GM12878 (cell line): ENCODE measurements at regions of chr3 and their contacts with region 1.

Region 1: GRCh38 chr3:153785902-153786301 is 335.3 kb upstream of the ARHGEF26 start:
- DNase-seq: no peak
- ATAC-seq: peak; percentile 78
- H3K4me3 ChIP-seq: no peak overlapping the region
- H3K27ac ChIP-seq: no peak overlapping the region
- H3K4me1 ChIP-seq: no peaks in the 10 kb centered on the region
- H3K27me3 ChIP-seq: no peaks in the 10 kb centered on the region
- CTCF ChIP-seq: peak in 2 of 3 experiments; percentile 19 to 25; a peak in 1 of 6 replicates
- EP300 ChIP-seq: no peak
- POLR2A ChIP-seq: no peak
- RAD21 ChIP-seq: peak; percentile 30; the same call in 1 of the 2 replicates

Region 2: DNA sequence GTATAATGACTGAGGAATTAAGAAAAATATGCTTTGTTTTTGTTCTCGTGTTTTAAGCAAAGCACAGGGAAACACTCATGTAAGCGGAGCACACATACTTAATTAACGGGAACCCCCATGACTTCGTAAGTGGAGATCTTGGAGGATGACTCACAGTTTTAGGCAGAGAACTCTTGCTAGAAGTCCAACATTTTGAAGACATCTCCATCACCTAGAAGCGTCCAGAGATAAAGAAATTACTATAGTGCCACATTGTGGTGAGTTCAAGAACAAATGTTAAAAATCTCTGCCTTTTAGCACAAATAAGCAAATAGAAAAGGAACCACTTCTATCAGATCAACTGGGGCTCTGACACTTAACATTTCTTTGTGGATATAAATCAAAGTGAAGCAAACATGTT is 141.2 kb after region 1 on chr3:
- CTCF ChIA-PET with region 1: interaction called, 14 read pairs
- POLR2A ChIA-PET with region 1: no interaction called
- RAD21 ChIA-PET with region 1: interaction called, 4 read pairs
- SMC1A ChIA-PET with region 1: interaction called, 26 read pairs
- in situ Hi-C with region 1: no loop called
- intact Hi-C with region 1: loop called (anchors 1 kb)
- DNase-seq: peak; percentile 2
- ATAC-seq: peak; percentile 85
- H3K4me3 ChIP-seq: no peak overlapping the region
- H3K27ac ChIP-seq: no peak overlapping the region
- H3K4me1 ChIP-seq: no peaks in the 10 kb centered on the region
- H3K27me3 ChIP-seq: no peaks in the 10 kb centered on the region
- CTCF ChIP-seq: peak in 1 of 3 experiments; percentile 36; a peak in 2 of 6 replicates
- EP300 ChIP-seq: no peak
- POLR2A ChIP-seq: no peak
- RAD21 ChIP-seq: no peak

Region 3: DNA sequence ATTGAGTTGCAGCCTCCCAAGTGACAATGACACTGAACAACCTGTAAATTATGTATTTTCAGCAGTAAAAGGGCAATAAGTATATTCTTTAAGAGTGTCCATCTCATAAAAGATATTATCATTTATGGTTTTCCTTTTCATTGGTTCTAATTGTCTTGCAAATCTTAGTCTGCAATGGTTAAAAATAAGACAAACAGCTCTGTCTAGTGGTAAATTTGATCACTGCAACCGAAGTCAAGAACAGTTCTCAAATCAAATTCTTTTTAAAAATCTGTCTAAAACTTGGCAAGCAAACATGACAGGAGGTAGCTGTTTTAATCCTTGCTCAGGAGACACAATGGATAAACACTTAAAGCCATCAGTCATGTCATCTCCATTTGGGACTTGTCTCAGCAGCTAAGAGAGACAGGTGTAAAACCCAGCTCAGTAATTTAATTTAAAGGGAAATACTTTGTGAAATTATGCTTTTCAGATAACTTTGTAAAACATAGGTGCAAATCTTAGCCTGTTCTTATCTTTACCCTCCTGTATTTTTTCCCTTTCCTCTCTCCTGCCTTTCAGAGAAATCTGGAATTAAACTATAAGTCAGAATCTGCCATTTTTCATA is 184.9 kb after region 1 on chr3:
- CTCF ChIA-PET with region 1: interaction called, 20 read pairs
- POLR2A ChIA-PET with region 1: no interaction called
- RAD21 ChIA-PET with region 1: interaction called, 9 read pairs
- SMC1A ChIA-PET with region 1: interaction called, 4 read pairs
- in situ Hi-C with region 1: no loop called
- intact Hi-C with region 1: loop called (anchors 2 kb)
- DNase-seq: no peak
- ATAC-seq: peak; percentile 27; the same call in 2 of the 3 replicates
- H3K4me3 ChIP-seq: no peak overlapping the region
- H3K27ac ChIP-seq: no peak overlapping the region
- H3K4me1 ChIP-seq: peaks cover 37% of the 10 kb centered on the region
- H3K27me3 ChIP-seq: no peaks in the 10 kb centered on the region
- CTCF ChIP-seq: peak; percentile 41 to 63 (median 49)
- EP300 ChIP-seq: no peak
- POLR2A ChIP-seq: no peak
- RAD21 ChIP-seq: peak; percentile 60

Region 4: GRCh38 chr3:154018100-154018696 is 232.3 kb after region 1 on chr3:
- CTCF ChIA-PET with region 1: no interaction called
- POLR2A ChIA-PET with region 1: no interaction called
- RAD21 ChIA-PET with region 1: no interaction called
- SMC1A ChIA-PET with region 1: no interaction called
- in situ Hi-C with region 1: no loop called
- intact Hi-C with region 1: loop called (anchors 1 kb)
- DNase-seq: peak; percentile 11
- ATAC-seq: peak; percentile 92
- H3K4me3 ChIP-seq: no peak overlapping the region
- H3K27ac ChIP-seq: no peak overlapping the region
- H3K4me1 ChIP-seq: no peaks in the 10 kb centered on the region
- H3K27me3 ChIP-seq: no peaks in the 10 kb centered on the region
- CTCF ChIP-seq: peak; percentile 65 to 68 (median 67)
- EP300 ChIP-seq: no peak
- POLR2A ChIP-seq: no peak
- RAD21 ChIP-seq: peak; percentile 50